ENCODE measurements at regions of chr11 and their contacts with region 1.

Region 1: GRCh38 chr11:17978553-17979287 is 34.1 kb downstream of the SERGEF start:
- DNase-seq: no peak

Region 2: GRCh38 chr11:17598700-17599459 is 379.8 kb before region 1 on chr11:
- intact Hi-C with region 1: loop called in 1 of 2 experiments (anchors 5 kb)
- DNase-seq: peak; percentile 92

Region 3: DNA sequence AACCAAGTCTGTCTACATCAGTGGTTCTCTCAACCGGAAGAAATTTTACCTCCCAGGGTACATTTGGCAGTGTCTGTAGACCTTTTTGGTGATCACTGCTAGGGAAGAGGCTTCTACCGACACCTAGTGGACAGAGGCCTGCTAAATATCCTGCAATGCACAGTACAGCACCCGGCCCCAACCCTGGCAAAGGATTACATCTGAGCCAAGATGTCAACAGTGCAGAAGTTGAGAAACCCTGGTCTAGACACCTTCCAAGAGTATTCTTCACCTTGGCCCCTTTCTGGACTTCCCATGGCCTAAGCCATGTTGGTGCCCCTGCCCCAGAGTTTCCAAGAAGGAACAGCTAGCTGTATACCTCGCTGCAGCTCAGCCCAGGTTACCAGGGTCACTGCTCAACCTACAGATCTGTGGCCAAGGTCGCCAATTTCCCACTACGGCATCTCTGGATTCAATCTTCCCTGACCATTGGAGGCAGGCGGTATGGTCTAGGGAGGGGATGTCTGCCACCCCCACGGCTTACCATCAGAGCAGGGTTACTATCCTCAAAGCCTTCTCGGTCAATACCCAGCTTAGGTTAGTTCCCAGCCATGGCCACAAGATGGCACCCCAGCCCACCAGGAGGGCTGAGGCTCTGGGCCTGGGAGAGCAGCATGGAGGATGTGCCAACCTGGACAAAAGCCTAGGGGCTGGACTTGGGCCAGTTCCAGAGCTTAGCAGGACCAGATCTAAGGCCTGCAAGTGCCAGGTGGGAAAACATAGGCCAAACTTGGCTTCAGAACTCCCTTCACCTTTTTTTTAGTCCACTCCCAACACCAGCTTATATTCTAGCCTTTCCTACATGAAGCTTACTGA is 247.9 kb before region 1 on chr11:
- intact Hi-C with region 1: loop called in 1 of 2 experiments (anchors 2 kb)
- DNase-seq: peak; percentile 92

Region 4: DNA sequence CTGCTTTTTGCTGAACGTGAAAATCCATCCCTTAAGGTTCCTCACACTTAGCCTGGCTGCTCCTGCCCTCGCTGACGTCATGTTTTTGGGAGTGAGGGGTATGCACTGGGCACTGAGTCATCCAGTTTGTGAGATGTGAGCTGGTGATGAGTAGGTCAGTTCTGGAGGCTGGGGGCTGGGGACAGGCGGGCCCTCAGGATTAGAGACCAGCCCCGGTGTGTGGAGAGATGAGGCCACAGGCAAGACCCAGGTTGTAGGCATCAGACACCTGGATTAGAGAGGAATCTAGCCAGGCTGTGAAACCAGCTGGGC is 235.0 kb before region 1 on chr11:
- intact Hi-C with region 1: loop called in 1 of 2 experiments (anchors 5 kb)
- DNase-seq: no peak

Region 5: GRCh38 chr11:18193010-18193409 is 214.3 kb after region 1 on chr11:
- intact Hi-C with region 1: no loop called
- DNase-seq: no peak

Region 6: GRCh38 chr11:18548001-18548400 is 569.3 kb after region 1 on chr11:
- intact Hi-C with region 1: no loop called
- DNase-seq: no peak

Measured in posterior vena cava (tissue), 2 donors.